Endothelial cell of umbilical vein (primary cell): ENCODE measurements at regions of chr19 and their contacts with region 1.

Region 1: DNA sequence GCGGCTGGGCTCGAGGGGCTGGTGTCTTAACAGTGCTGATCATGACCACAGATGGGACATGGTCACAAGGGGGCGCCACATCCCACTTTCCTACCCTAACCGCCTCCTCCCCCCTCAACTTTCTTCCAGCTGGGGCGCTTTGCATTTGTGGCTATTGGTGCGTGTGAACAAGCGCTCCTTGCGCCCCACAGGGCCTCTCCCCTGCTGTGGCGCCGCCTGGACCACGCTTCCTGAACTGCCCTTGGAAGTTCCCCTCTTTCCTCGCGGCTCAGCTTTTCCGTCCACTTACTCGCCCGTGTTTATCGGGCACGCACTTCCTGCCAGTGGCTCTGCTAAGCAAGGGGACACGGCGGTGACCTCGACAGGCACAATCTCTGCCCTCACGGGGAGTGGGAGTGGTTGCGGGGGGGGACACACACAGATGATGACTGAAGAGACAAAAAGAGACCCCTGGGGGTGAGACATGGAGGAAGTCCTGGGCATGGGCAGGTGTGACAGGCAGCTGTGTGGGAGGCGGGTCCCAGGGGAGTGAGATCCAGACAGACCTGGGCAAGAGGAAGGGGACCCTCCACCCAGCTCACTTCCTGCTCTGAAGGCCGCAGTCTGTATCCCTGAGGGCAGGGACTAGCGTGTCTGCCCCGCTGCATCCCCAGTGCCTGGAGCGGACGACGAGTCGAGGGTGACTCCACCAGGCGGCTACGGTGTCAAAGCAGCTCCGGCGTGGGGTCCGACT is 40.3 kb downstream of the ZNF787 start:
- DNase-seq: peak; percentile 83
- H3K4me3 ChIP-seq: peak overlapping the region; percentile 10 to 38 (median 32)
- H3K27ac ChIP-seq: no peak overlapping the region
- H3K4me1 ChIP-seq: peaks cover 8% of the 10 kb centered on the region
- H3K27me3 ChIP-seq: peaks cover 0 to 3% of the 10 kb centered on the region in 2 experiments
- CTCF ChIP-seq: peak; percentile 58 to 81
- POLR2A ChIP-seq: no peak

Region 2: DNA sequence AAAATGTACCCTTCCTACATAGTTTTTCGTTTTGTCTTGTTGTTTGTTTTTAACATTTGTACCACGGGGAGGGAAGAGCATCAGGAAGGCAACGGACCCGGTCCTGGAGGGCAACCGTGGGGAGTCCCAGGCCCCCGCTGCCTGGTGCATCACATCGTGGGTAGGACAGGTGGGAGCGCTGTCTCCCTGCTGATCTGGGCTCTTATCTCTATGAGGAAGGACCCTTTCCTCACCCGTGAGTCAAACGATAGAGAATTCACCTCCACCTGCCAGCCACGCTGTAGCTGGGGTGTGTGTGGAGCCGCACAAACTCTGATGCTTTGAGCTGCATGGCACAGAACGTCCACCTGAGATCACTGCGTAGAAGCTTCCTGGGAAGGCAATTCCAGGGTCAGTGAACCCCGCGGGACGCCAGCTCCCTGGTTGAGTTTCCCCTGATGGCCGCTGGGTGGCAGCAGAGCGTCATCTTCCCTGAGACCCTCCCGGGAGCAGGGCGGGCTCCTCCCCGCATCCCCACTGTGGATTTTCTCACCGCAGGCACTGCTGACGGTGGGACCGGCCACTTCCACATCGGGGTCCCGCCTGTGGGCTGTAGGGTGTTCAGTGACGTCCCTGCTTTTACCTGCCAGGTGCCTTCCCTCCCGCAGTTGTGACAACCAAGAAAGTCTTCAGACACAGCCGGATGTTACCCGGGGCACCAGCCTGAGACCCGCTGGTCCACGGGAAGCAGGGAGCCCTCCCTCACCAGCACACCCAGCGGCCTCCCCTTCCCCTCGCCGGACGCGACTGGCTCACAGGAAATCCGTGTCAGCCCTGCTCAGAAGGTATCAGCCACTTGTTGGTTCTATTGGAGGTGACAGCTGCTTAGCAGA is 14.4 kb before region 1 on chr19:
- CTCF ChIA-PET with region 1: interaction called, 90 read pairs
- POLR2A ChIA-PET with region 1: no interaction called
- dilution Hi-C with region 1: no loop called
- intact Hi-C with region 1: no loop called
- DNase-seq: peak; percentile 54
- H3K4me3 ChIP-seq: peak overlapping the region in 2 of 3 experiments; percentile 20 to 32
- H3K27ac ChIP-seq: no peak overlapping the region
- H3K4me1 ChIP-seq: peaks cover 7% of the 10 kb centered on the region
- H3K27me3 ChIP-seq: no peaks in the 10 kb centered on the region
- CTCF ChIP-seq: peak; percentile 91 to 95
- POLR2A ChIP-seq: no peak

Region 3: GRCh38 chr19:56140583-56141416 is 60.0 kb after region 1 on chr19 and contains the start of gene ZNF444:
- CTCF ChIA-PET with region 1: interaction called, 18 read pairs
- POLR2A ChIA-PET with region 1: no interaction called
- dilution Hi-C with region 1: no loop called
- intact Hi-C with region 1: no loop called
- DNase-seq: peak; percentile 100
- H3K4me3 ChIP-seq: peak within 1 kb of the TSS; percentile 57 to 73 (median 70)
- H3K27ac ChIP-seq: peak within 1 kb of the TSS; percentile 61
- H3K4me1 ChIP-seq: peaks cover 10% of the 10 kb centered on the region
- H3K27me3 ChIP-seq: no peaks in the 10 kb centered on the region
- CTCF ChIP-seq: no peak
- POLR2A ChIP-seq: peak; percentile 59
- total RNA-seq, gene ZNF444: 37.1 and 37.2 TPM in 2 replicates

Region 4: GRCh38 chr19:56350416-56351045 is 269.7 kb after region 1 on chr19:
- CTCF ChIA-PET with region 1: interaction called, 12 read pairs
- POLR2A ChIA-PET with region 1: no interaction called
- dilution Hi-C with region 1: no loop called
- intact Hi-C with region 1: loop called (anchors 1 kb)
- DNase-seq: peak; percentile 55
- H3K4me3 ChIP-seq: no peak overlapping the region
- H3K27ac ChIP-seq: no peak overlapping the region
- H3K4me1 ChIP-seq: no peaks in the 10 kb centered on the region
- H3K27me3 ChIP-seq: no peaks in the 10 kb centered on the region
- CTCF ChIP-seq: peak; percentile 56 to 75
- POLR2A ChIP-seq: no peak